ENCODE measurements at regions of chr11 and their contacts with region 1.

Region 1: GRCh38 chr11:19597224-19597623 is 115.4 kb upstream of the NAV2 start:
- DNase-seq: no peak
- H3K4me3 ChIP-seq: no peak overlapping the region
- H3K27ac ChIP-seq: no peak overlapping the region
- H3K4me1 ChIP-seq: peaks cover 19% of the 10 kb centered on the region
- H3K27me3 ChIP-seq: no peaks in the 10 kb centered on the region
- CTCF ChIP-seq: no peak

Region 2: DNA sequence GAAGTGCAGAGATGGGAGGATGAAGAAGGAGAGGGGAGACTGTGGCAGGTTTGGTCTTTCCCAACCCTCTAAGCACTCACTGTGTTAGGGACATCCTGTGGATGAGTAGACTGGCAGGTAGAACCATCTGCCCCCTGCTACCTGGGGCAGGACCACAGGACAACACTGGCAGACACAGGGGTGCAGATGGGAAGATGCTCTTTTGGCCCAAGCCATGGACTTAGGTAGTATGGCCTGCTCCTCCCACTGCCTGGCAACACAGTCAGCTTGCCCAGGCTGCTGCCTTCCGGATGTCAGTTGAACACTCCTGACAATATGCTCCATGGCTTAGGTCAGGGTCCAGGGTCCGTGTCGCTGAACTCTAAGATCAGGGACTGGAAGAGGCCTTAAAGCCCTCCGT is 25.3 kb before region 1 on chr11:
- CTCF ChIA-PET with region 1: no interaction called
- POLR2A ChIA-PET with region 1: interaction called, 12 read pairs
- intact Hi-C with region 1: no loop called
- DNase-seq: no peak
- H3K4me3 ChIP-seq: no peak overlapping the region
- H3K27ac ChIP-seq: no peak overlapping the region
- H3K4me1 ChIP-seq: no peaks in the 10 kb centered on the region
- H3K27me3 ChIP-seq: no peaks in the 10 kb centered on the region
- CTCF ChIP-seq: no peak

Measured in PC-9 (cell line).